IMR-90 (cell line): ENCODE measurements at regions of chr15 and their contacts with region 1.

Region 1: DNA sequence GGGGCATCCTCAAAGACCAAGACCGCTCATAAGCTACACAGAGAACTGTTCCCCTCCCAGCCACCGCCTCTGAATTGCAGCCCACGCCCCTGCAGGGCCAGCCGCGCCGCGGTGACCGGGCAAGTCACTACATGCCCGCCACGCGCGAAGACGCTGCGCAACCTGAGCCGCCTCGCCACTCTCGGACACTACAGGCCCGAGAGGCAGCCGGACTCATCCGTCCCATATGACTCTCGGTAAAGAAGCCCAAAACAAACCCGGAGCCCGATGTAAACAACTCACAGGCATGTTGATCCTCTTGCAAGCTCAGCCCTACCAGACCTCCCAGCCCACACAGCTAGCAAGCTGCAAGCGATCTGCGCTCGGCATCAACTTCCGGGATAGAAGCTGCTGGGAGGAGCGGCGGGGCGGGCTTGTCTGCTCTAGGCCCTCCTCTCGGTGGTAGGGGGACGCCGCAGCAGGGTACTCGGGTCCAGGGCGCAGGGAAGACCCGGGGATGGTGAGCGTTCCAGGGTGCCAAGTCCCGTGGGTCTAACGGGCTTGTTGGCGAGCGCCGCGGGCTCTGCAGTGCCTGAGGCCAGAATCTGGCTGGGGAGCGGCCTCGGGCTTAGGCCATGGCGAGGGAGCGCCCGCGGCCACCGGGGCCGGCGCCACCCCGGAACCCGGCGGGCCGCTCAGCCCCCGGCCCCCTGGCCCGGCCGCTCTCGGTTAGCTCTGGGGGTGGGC is at the start of gene RPS27L:
- DNase-seq: peak; percentile 95
- ATAC-seq: peak; percentile 95
- H3K4me3 ChIP-seq: peak within 1 kb of the TSS; percentile 97
- H3K27ac ChIP-seq: peak within 1 kb of the TSS; percentile 95
- H3K4me1 ChIP-seq: peaks cover 2% of the 10 kb centered on the region
- H3K27me3 ChIP-seq: no peaks in the 10 kb centered on the region
- CTCF ChIP-seq: no peak
- POLR2A ChIP-seq: peak; percentile 93
- RAD21 ChIP-seq: no peak; the same call in 1 of the 2 replicates
- total RNA-seq, gene RPS27L: 53.1 and 64.7 TPM in 2 replicates

Region 2: DNA sequence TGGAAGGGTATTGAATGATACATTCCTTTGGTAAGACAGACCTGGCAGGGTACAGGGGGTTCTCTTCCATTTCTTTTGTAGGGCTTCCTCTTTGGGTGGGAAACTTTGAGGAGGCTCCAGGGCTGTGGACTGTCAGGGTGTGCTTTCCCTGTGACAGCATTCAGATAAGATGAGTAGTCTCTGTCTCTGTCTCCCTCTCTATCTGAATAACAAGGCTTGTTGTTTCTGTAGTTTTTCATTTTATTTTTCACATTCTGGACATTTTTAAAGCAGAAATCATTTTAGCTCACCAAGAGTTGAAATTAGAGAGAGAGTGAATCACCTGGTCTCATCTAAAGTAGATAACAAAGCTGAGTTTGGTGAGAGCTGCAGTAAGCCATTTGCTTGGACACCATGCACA is 215.6 kb before region 1 on chr15:
- CTCF ChIA-PET with region 1: no interaction called
- POLR2A ChIA-PET with region 1: no interaction called
- dilution Hi-C with region 1: no loop called
- in situ Hi-C with region 1: no loop called
- intact Hi-C with region 1: no loop called
- DNase-seq: peak; percentile 52
- ATAC-seq: 0 out of 2 replicates have a peak, but pooled peaks have one; percentile 9
- H3K4me3 ChIP-seq: no peak overlapping the region
- H3K27ac ChIP-seq: no peak overlapping the region
- H3K4me1 ChIP-seq: peaks cover 17% of the 10 kb centered on the region
- H3K27me3 ChIP-seq: no peaks in the 10 kb centered on the region
- CTCF ChIP-seq: no peak
- POLR2A ChIP-seq: no peak
- RAD21 ChIP-seq: no peak

Region 3: DNA sequence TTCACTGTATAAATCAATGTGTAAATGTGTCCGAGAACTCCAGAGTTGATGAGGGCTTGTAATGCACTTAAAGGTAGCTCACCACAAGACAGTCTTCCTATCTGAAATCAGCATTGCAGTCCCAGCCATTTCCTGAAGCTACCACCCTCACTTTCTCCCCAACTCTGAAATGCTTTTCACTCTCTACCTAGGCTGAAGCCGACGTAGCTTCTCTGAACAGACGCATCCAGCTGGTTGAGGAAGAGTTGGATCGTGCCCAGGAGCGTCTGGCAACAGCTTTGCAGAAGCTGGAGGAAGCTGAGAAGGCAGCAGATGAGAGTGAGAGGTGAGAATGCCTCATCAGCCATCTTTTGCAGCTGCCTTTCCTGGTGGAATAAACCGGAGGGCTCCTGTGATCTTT is 100.5 kb before region 1 on chr15:
- CTCF ChIA-PET with region 1: interaction called, 5 read pairs
- POLR2A ChIA-PET with region 1: interaction called, 4 read pairs
- dilution Hi-C with region 1: no loop called
- in situ Hi-C with region 1: no loop called
- intact Hi-C with region 1: loop called (anchors 5 kb)
- DNase-seq: peak; percentile 85
- ATAC-seq: no peak; the same call in 1 of the 2 replicates
- H3K4me3 ChIP-seq: no peak overlapping the region
- H3K27ac ChIP-seq: peak overlapping the region; percentile 4; the same call in 1 of the 2 replicates
- H3K4me1 ChIP-seq: peaks cover 36% of the 10 kb centered on the region
- H3K27me3 ChIP-seq: no peaks in the 10 kb centered on the region
- CTCF ChIP-seq: no peak
- POLR2A ChIP-seq: no peak
- RAD21 ChIP-seq: no peak

Region 4: DNA sequence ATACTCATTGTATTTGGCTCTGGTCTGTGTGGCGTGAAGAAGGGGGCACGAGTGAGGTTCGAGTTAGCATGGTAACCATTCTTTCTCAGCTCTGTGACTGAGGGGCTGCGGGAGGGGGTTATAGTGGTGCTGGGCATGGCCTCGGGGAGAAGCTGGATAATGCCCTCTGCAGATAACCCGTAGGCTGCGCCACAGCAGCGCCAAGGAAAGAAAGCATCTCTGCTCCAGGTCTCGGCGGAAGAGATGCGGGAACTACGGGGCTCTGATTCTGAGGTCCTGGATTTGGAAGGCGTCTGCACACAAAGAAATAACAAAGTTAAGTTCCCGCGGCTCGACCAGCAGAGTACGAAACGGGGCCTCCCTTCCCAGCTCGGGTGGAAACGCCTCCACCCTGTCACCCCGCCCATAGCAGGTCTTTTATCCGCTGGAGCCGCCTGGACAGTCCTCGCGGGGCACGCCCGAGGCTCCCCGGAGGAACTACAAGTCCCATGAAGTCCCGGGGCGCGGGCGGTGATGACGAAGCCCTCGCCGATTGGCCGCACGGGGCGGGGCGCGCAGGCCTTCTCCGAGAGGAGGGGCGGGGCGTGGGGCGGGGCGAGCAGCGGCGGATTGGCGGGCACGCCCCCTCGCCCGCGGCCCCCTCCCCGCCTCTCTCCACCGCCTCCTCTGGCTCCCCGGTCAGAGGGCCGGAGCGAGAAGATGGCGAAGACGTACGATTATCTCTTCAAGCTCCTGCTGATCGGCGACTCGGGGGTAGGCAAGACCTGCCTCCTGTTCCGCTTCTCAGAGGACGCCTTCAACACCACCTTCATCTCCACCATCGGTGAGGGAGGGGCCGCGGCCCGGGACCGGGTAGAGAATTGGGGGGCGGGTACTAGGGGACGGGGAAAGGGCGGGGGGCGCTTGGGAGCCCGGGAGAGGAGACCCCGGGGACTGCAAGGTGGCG is 31.9 kb after region 1 on chr15 and contains the start of gene RAB8B:
- CTCF ChIA-PET with region 1: no interaction called
- POLR2A ChIA-PET with region 1: interaction called, 4 read pairs
- dilution Hi-C with region 1: no loop called
- in situ Hi-C with region 1: no loop called
- intact Hi-C with region 1: loop called (anchors 5 kb)
- DNase-seq: peak; percentile 94
- ATAC-seq: peak; percentile 98
- H3K4me3 ChIP-seq: peak within 1 kb of the TSS; percentile 95
- H3K27ac ChIP-seq: peak within 1 kb of the TSS; percentile 97
- H3K4me1 ChIP-seq: peaks cover 10% of the 10 kb centered on the region
- H3K27me3 ChIP-seq: no peaks in the 10 kb centered on the region
- CTCF ChIP-seq: no peak
- POLR2A ChIP-seq: peak; percentile 72
- RAD21 ChIP-seq: no peak; the same call in 1 of the 2 replicates
- total RNA-seq, gene RAB8B: 29.4 and 66.4 TPM in 2 replicates

Region 5: DNA sequence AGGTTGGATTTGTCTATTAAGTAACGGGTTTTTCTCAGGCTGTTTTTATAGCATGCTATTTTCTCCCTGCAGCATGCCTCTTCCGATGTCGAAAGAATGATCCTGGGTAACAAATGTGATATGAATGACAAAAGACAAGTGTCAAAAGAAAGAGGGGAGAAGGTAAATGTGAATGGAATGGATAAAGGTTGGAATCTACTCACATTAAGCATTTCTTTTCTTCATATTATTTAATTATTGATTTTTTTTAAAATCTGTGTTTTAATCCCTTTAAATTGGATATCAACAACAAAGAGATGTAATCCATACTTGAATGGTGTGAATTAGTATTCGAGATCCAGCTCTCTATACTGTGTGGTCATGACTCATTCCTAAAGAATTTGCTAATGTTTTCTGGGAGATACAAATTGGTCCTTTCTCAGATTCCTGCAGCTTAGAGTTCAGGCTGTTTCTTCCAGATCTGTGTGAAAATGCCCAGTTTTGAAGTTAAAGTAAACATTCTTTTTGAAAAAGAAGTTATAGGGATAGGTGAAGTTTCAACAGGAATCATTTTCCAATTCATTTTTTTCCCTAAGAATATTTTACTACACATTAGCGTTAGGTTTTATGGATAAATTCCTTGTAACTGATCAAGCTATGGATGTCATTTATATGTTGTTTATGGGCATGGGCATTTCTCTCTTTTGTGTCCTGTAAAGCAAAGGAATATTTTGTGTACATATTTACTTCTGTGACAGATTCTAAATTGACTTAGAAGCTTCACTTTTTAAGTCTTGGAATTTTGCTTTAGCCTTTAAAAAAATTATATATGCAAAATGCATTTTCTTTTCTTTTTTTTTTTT is 99.4 kb after region 1 on chr15:
- CTCF ChIA-PET with region 1: no interaction called
- POLR2A ChIA-PET with region 1: no interaction called
- dilution Hi-C with region 1: no loop called
- in situ Hi-C with region 1: no loop called
- intact Hi-C with region 1: loop called (anchors 5 kb)
- DNase-seq: peak; percentile 84
- ATAC-seq: peak; percentile 82
- H3K4me3 ChIP-seq: no peak overlapping the region
- H3K27ac ChIP-seq: no peak overlapping the region
- H3K4me1 ChIP-seq: peaks cover 5% of the 10 kb centered on the region
- H3K27me3 ChIP-seq: no peaks in the 10 kb centered on the region
- CTCF ChIP-seq: no peak
- POLR2A ChIP-seq: no peak
- RAD21 ChIP-seq: no peak

Region 6: DNA sequence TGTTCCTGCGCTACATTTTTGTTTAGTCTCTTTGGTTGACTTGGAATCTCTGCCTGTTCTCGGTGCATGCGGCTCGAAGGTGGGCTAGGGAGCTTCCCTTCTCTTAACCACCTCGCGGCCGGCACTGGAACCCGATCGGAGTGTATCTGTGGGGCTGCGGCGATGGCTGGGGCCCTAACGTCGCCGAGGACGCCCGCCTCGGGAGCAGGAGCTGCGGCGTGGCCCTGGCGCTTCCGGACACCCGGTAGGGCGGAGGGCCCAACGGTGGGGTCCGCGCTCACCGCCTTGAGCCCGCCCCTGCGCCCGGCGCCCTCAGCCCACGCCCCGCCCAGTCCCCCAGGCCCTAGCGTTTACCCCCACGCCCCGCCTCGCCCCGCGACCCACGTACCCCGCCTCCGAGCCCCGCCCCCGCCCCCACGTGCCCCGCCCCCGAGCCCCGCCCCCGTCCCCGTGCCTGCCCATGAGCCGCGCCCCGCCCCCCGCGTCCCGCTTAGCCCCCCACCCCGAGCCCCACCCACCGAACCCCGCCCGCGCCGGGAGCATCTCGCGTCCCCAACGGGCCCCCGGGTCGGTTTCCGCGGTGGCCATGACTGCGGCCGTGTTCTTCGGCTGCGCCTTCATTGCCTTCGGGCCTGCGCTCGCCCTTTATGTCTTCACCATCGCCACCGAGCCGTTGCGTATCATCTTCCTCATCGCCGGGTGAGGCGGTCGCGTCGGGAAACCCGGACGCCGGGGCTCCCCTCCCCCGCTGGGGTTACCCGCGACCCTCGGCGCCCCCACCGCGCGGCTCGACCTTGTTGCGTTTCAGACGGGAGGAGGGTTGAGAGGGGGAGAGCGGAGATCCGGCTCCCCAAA is 120.0 kb after region 1 on chr15 and contains the start of gene APH1B:
- CTCF ChIA-PET with region 1: interaction called, 3 read pairs
- POLR2A ChIA-PET with region 1: interaction called, 3 read pairs
- dilution Hi-C with region 1: no loop called
- in situ Hi-C with region 1: no loop called
- intact Hi-C with region 1: loop called (anchors 2 kb)
- DNase-seq: peak; percentile 48
- ATAC-seq: peak; percentile 92
- H3K4me3 ChIP-seq: peak within 1 kb of the TSS; percentile 92
- H3K27ac ChIP-seq: peak within 1 kb of the TSS; percentile 86
- H3K4me1 ChIP-seq: peaks cover 3% of the 10 kb centered on the region; the same call in 1 of the 2 replicates
- H3K27me3 ChIP-seq: no peaks in the 10 kb centered on the region
- CTCF ChIP-seq: no peak
- POLR2A ChIP-seq: no peak
- RAD21 ChIP-seq: no peak
- total RNA-seq, gene APH1B: 7.7 and 10.6 TPM in 2 replicates

Region 7: DNA sequence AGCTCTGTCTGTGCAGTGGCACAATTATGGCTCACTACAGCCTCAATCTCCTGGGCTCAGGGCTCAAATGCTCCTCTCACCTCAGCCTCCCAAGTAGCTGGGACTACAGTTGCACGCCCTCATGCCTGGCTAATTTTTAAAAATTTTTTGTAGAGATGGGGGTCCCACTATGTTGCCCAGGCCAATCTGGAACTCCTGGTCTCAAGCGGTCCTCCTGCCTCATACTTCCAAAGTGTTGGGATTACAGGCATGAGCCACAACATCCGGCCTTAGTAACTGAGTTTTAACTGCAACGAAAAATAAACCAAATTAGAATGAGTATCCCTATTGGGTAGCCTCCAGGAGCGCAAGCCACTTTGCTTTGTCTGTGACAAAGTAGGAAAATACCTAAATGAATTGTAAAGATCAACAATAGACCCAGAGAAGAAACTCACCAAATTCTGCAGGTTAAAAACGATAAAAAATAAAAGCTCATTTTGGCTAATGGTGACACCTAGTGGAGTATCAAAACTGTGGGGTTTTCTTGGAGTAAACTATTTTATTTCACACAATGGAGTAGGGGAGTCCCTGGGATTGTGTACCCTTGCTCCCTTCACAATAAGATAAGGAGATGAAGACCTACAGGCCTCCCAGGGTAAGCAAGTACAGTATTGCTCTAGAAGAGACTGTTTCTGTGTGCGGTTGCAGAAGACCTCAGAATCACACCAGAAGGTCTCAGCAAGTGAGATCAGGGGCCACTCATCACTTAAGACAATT is 245.4 kb after region 1 on chr15:
- CTCF ChIA-PET with region 1: no interaction called
- POLR2A ChIA-PET with region 1: no interaction called
- dilution Hi-C with region 1: no loop called
- in situ Hi-C with region 1: loop called (anchors 25 kb)
- intact Hi-C with region 1: loop called (anchors 2 kb)
- DNase-seq: peak; percentile 57
- ATAC-seq: peak; percentile 76
- H3K4me3 ChIP-seq: no peak overlapping the region
- H3K27ac ChIP-seq: no peak overlapping the region
- H3K4me1 ChIP-seq: peaks cover 7% of the 10 kb centered on the region; the same call in 1 of the 2 replicates
- H3K27me3 ChIP-seq: no peaks in the 10 kb centered on the region
- CTCF ChIP-seq: peak; percentile 77
- POLR2A ChIP-seq: no peak
- RAD21 ChIP-seq: peak; percentile 79